ENCODE measurements at regions of chr10 and their contacts with region 1.

Region 1: DNA sequence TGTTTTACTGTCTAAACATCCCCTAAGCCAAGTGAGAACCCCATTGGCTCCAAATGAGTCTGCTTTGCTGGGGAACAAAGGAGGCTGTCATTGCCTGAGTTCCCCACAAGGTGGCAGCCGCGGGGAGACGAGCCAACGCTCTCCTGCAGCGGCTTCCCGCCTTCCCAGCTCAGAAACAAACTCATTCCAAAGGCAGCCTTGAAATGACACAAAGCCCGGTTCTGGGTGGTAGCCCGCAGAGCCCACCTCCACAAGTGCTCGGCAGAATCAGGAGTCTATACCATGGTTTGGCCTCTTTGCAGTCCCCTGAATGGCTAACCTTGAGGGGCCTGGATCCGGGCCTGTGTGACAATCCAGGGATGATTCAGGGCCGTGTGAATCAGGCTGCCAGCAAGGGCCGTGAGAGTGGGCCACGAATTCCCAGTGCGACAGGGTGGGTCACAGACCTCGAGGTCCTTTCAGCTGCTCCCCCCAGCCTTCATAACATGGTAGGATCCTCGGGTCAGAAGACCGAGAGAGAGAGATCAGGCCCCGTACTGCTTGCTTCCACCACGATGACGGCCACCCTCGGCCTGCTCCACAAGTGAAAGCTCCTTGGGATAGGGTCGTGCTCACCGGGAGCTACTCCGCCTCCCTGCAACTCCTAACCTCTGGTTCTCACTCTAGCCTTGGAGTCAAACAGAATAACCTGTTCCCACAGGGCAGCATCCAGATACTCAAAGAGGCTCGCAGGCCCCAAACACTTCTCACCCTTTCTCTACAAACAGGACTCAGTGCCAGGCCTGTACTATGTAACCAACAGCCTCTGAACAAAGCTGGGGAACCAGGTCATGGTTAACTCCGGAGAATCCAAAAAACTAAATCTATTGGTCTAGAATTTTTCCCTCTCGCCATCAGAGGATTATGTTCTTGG is 79.6 kb downstream of the DLG5 start:
- DNase-seq: peak; percentile 87
- ATAC-seq: peak; percentile 90
- H3K4me3 ChIP-seq: no peak overlapping the region
- H3K27ac ChIP-seq: no peak overlapping the region
- H3K4me1 ChIP-seq: peaks cover 4% of the 10 kb centered on the region
- H3K27me3 ChIP-seq: no peaks in the 10 kb centered on the region
- CTCF ChIP-seq: peak; percentile 97

Region 2: GRCh38 chr10:77416311-77417135 is 430.5 kb before region 1 on chr10:
- intact Hi-C with region 1: no loop called
- DNase-seq: no peak
- ATAC-seq: peak; percentile 16
- H3K4me3 ChIP-seq: no peak overlapping the region
- H3K27ac ChIP-seq: no peak overlapping the region
- H3K4me1 ChIP-seq: no peaks in the 10 kb centered on the region
- H3K27me3 ChIP-seq: no peaks in the 10 kb centered on the region
- CTCF ChIP-seq: no peak

Region 3: GRCh38 chr10:77428691-77429395 is 418.1 kb before region 1 on chr10:
- intact Hi-C with region 1: no loop called
- DNase-seq: peak; percentile 71
- ATAC-seq: peak; percentile 83
- H3K4me3 ChIP-seq: no peak overlapping the region
- H3K27ac ChIP-seq: no peak overlapping the region
- H3K4me1 ChIP-seq: peaks cover 4% of the 10 kb centered on the region
- H3K27me3 ChIP-seq: no peaks in the 10 kb centered on the region
- CTCF ChIP-seq: peak; percentile 63

Region 4: GRCh38 chr10:77983384-77984341 is 136.7 kb after region 1 on chr10:
- intact Hi-C with region 1: loop called (anchors 10 kb)
- DNase-seq: no peak
- ATAC-seq: no peak
- H3K4me3 ChIP-seq: no peak overlapping the region
- H3K27ac ChIP-seq: no peak overlapping the region
- H3K4me1 ChIP-seq: no peaks in the 10 kb centered on the region
- H3K27me3 ChIP-seq: no peaks in the 10 kb centered on the region
- CTCF ChIP-seq: no peak

Region 5: DNA sequence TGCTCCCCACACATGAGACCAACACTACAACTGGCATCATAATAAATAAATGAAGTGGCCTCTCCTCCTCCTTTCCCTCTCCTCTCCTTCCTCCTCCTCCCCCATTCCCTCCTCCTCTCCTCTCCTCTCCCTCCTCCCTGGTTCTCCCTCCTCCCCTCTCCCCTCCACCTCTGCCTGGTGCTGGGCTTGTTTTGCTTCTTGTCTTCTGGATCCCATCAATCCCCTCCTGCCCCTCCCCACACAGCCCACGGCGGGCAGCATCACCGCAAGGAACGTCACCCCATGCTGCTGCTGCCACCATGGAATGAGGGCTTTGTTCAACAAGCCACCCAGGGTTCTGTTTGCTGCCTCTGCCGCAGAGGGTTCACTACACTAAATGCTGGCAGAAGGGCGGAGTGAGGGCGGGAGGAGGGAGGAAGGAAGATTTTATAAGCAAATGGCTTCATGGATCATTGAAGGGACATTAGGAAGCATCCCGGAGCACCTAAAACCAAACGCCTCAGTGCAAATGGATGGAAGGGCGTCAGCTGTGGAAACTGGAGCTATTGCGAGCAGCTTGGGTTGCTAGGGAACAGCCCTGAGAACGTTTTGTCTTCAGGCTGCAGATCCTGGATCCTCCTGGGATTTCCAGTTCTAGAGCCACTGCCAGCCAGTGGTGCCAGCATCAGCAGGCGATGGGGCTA is 842.1 kb after region 1 on chr10:
- intact Hi-C with region 1: no loop called
- DNase-seq: no peak
- ATAC-seq: no peak
- H3K4me3 ChIP-seq: no peak overlapping the region
- H3K27ac ChIP-seq: peak overlapping the region; percentile 3
- H3K4me1 ChIP-seq: peaks cover 7% of the 10 kb centered on the region
- H3K27me3 ChIP-seq: no peaks in the 10 kb centered on the region
- CTCF ChIP-seq: no peak

Measured in upper lobe of right lung (tissue), 1 donor.